ENCODE measurements at regions of chrX and their contacts with region 1.

Region 1: GRCh38 chrX:53081925-53082772 is at the start of gene TSPYL2:
- DNase-seq: peak; percentile 88 to 97 (median 92)
- ATAC-seq: peak; percentile 85
- H3K4me3 ChIP-seq: peak within 1 kb of the TSS; percentile 77
- H3K4me3 Mint-ChIP-seq: peak within 1 kb of the TSS; percentile 95
- H3K27ac ChIP-seq: peak within 1 kb of the TSS; percentile 59 to 80
- H3K27ac Mint-ChIP-seq: peak within 1 kb of the TSS; percentile 99
- H3K4me1 ChIP-seq: peaks cover 30% of the 10 kb centered on the region
- H3K4me1 Mint-ChIP-seq: peaks cover 62% of the 10 kb centered on the region
- H3K27me3 ChIP-seq: no peaks in the 10 kb centered on the region
- H3K27me3 Mint-ChIP-seq: no peaks in the 10 kb centered on the region
- CTCF ChIP-seq: no peak
- total RNA-seq, gene TSPYL2: 428 to 461 TPM

Region 2: DNA sequence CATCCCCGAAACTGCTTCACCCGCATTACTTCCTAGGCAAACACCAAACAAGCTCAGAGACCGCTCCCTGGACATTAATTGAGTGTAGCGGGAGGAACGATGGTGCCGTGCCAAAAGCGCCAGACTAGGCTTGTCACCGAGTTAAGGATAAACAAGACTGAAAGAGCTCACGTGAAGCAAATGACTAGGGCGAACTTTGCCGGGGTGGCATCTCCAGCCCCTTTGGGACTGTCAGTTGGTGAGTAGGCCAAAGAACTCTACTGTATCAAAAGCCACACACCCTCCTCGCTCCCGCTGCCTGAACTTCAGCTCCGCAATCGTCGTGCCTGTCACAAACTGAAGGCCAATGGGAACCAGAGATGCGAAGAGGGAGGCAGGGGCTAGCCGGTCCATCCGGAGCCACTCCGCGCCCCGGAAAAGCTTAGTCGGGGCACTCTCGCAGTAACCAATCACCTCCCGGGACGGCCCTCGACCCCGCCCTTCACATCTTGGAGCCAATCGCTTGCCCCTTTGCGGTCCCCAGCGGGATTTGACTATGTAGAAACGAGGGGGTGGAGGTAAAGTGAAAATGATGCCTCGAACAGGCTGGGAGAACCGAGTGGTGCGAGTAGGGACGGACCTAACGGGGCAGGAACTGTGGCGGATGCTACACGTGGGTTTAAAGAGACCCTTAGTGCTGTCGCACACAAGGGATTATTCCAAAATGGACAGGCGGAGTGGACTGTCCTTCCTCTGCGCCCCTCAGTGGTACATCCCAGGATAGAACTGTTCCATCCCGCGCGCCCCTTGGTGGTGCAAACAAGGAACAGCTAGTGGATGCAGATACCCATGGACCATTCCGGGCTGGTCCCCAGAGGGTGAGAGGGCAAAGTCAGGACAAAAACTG is 86.8 kb before region 1 on chrX:
- CTCF ChIA-PET with region 1: no interaction called
- POLR2A ChIA-PET with region 1: interaction called, 16 read pairs
- intact Hi-C with region 1: no loop called
- DNase-seq: peak; percentile 82 to 96 (median 87)
- ATAC-seq: peak; percentile 95
- H3K4me3 ChIP-seq: peak overlapping the region; percentile 61
- H3K4me3 Mint-ChIP-seq: peak overlapping the region; percentile 99
- H3K27ac ChIP-seq: peak overlapping the region; percentile 84 to 95
- H3K27ac Mint-ChIP-seq: peak overlapping the region; percentile 99
- H3K4me1 ChIP-seq: peaks cover 27% of the 10 kb centered on the region
- H3K4me1 Mint-ChIP-seq: peaks cover 25% of the 10 kb centered on the region
- H3K27me3 ChIP-seq: no peaks in the 10 kb centered on the region
- H3K27me3 Mint-ChIP-seq: no peaks in the 10 kb centered on the region
- CTCF ChIP-seq: peak; percentile 65

Region 3: GRCh38 chrX:53071604-53072417 is 10.3 kb before region 1 on chrX:
- CTCF ChIA-PET with region 1: interaction called, 4 read pairs
- POLR2A ChIA-PET with region 1: interaction called, 31 read pairs
- intact Hi-C with region 1: no loop called
- DNase-seq: peak; percentile 39 to 90 (median 62)
- ATAC-seq: peak; percentile 88
- H3K4me3 ChIP-seq: peak overlapping the region; percentile 58
- H3K4me3 Mint-ChIP-seq: peak overlapping the region; percentile 91
- H3K27ac ChIP-seq: no peak overlapping the region
- H3K27ac Mint-ChIP-seq: peak overlapping the region; percentile 89
- H3K4me1 ChIP-seq: peaks cover 11% of the 10 kb centered on the region
- H3K4me1 Mint-ChIP-seq: peaks cover 17% of the 10 kb centered on the region
- H3K27me3 ChIP-seq: no peaks in the 10 kb centered on the region
- H3K27me3 Mint-ChIP-seq: no peaks in the 10 kb centered on the region
- CTCF ChIP-seq: peak; percentile 67

Region 4: GRCh38 chrX:53093748-53094583 is 11.8 kb after region 1 on chrX and contains the start of gene KANTR:
- CTCF ChIA-PET with region 1: interaction called, 3 read pairs
- POLR2A ChIA-PET with region 1: interaction called, 15 read pairs
- intact Hi-C with region 1: no loop called
- DNase-seq: peak; percentile 36 to 92 (median 72)
- ATAC-seq: peak; percentile 76
- H3K4me3 ChIP-seq: peak within 1 kb of the TSS; percentile 81
- H3K4me3 Mint-ChIP-seq: peak within 1 kb of the TSS; percentile 93
- H3K27ac ChIP-seq: peak within 1 kb of the TSS; percentile 58 to 85
- H3K27ac Mint-ChIP-seq: peak within 1 kb of the TSS; percentile 93
- H3K4me1 ChIP-seq: peaks cover 16% of the 10 kb centered on the region
- H3K4me1 Mint-ChIP-seq: peaks cover 35% of the 10 kb centered on the region
- H3K27me3 ChIP-seq: no peaks in the 10 kb centered on the region
- H3K27me3 Mint-ChIP-seq: no peaks in the 10 kb centered on the region
- CTCF ChIP-seq: no peak
- total RNA-seq, gene KANTR: 6.2 to 6.8 TPM

Region 5: GRCh38 chrX:53224860-53225797 is 143.0 kb after region 1 on chrX and contains the start of gene KDM5C:
- CTCF ChIA-PET with region 1: no interaction called
- POLR2A ChIA-PET with region 1: interaction called, 21 read pairs
- intact Hi-C with region 1: loop called in 1 of 2 experiments (anchors 5 kb)
- DNase-seq: peak; percentile 68 to 94 (median 88)
- ATAC-seq: peak; percentile 74
- H3K4me3 ChIP-seq: peak within 1 kb of the TSS; percentile 98
- H3K4me3 Mint-ChIP-seq: peak within 1 kb of the TSS; percentile 100
- H3K27ac ChIP-seq: peak within 1 kb of the TSS; percentile 89 to 91
- H3K27ac Mint-ChIP-seq: peak within 1 kb of the TSS; percentile 95
- H3K4me1 ChIP-seq: peaks cover 32% of the 10 kb centered on the region
- H3K4me1 Mint-ChIP-seq: peaks cover 38% of the 10 kb centered on the region
- H3K27me3 ChIP-seq: no peaks in the 10 kb centered on the region
- H3K27me3 Mint-ChIP-seq: no peaks in the 10 kb centered on the region
- CTCF ChIP-seq: no peak
- total RNA-seq, gene KDM5C: 236 to 237 TPM

Region 6: DNA sequence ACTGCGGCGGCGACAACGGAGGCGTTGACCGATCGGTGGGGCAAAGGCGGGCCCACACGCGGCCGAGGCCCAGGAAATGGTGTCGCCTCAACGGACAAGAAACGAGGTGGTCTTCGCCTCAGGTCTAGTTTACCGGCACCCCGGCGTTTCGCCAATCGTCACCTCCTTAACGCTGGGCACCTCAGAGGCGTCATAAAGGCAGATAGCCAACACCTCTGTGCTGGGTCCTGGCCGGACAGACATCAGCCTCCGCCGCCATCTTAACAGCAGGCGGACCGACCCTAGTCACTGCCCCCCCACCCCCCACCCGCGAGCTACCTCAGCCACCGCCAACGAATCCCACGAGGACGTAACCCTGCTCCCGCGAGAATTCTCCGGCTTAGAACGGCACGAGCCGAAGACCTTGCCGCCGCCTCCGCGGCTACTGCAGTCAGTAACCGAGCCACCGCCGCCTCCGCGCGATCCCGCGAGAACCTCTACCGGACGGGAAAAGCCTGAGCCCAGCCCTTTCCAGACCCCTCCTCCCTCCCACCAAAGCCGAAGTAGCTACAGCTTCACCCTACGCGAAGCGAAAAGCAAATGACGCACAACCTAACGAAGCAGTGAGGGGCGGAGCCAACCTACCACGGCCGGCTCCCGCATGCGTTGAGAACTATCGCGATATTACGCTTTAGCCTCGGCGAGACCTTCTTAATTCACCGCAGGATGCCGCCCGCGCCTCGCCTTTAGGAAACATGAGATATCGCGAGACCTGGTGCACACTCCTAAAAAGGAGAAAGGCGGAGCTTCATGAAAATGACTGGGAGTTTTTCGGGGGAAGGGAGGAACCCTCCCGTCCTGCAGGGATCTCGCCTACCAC is 601.6 kb after region 1 on chrX:
- CTCF ChIA-PET with region 1: no interaction called
- POLR2A ChIA-PET with region 1: interaction called, 13 read pairs
- intact Hi-C with region 1: no loop called
- DNase-seq: peak; percentile 77 to 98 (median 86)
- ATAC-seq: peak; percentile 78
- H3K4me3 ChIP-seq: peak overlapping the region; percentile 90
- H3K4me3 Mint-ChIP-seq: peak overlapping the region; percentile 95
- H3K27ac ChIP-seq: peak overlapping the region; percentile 75 to 98
- H3K27ac Mint-ChIP-seq: peak overlapping the region; percentile 99
- H3K4me1 ChIP-seq: peaks cover 18% of the 10 kb centered on the region
- H3K4me1 Mint-ChIP-seq: peaks cover 63% of the 10 kb centered on the region
- H3K27me3 ChIP-seq: no peaks in the 10 kb centered on the region
- H3K27me3 Mint-ChIP-seq: no peaks in the 10 kb centered on the region
- CTCF ChIP-seq: no peak

Measured in CD4-positive, alpha-beta T cell (primary cell).